SK-N-SH (cell line): ENCODE measurements at regions of chr2 and their contacts with region 1.

Region 1: DNA sequence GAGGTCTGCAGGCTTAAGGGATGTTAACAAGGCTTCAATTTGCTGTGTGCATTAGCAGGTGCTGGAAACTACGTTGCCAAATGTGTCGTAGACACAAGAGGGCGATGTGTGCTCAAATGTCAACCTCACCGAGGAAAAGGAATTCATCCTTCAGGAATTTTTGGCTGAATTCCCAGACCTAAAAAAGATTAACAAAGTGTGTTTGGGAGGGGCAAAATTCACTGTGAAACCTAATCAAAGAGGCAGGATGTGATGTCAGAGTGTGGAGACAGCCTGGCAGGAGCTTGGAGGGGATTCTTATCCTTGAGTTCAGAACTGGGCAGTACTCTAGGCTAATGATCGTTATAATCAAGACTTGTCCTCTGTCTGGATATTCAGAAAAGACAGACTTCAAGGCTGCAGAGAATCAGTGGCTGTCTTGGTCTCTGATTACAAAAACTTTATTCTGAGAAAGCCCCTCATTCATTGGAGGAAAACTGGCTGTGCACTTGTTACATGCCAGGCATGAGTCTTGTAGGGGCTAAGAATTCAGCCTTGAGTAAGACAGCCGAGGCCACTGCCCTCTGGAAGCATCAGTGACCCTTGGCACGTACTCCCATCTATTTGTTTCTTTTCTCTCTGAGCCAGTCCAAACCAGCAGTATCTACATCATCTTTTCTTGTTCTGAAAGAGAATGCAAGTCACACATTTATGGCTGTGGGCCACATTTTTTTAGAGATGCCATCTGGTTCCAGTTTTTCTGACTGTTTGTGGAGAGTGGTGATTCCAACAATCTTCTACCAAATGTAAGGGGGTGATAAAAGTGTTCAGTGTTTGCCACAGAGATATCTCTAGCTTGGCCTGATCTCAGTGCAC is 18.7 kb upstream of the SCYGR1 start:
- DNase-seq: peak; percentile 77
- H3K4me3 ChIP-seq: peak overlapping the region; percentile 13 to 28; a peak in 2 of 4 replicates
- H3K27ac ChIP-seq: peak overlapping the region; percentile 79 to 96
- H3K4me1 ChIP-seq: peaks cover 5 to 20% of the 10 kb centered on the region in 2 experiments; a peak in 2 of 4 replicates
- H3K27me3 ChIP-seq: no peaks in the 10 kb centered on the region
- CTCF ChIP-seq: peak; percentile 89
- EP300 ChIP-seq: peak; percentile 58 to 60; a peak in 3 of 4 replicates
- RAD21 ChIP-seq: peak; percentile 96

Region 2: DNA sequence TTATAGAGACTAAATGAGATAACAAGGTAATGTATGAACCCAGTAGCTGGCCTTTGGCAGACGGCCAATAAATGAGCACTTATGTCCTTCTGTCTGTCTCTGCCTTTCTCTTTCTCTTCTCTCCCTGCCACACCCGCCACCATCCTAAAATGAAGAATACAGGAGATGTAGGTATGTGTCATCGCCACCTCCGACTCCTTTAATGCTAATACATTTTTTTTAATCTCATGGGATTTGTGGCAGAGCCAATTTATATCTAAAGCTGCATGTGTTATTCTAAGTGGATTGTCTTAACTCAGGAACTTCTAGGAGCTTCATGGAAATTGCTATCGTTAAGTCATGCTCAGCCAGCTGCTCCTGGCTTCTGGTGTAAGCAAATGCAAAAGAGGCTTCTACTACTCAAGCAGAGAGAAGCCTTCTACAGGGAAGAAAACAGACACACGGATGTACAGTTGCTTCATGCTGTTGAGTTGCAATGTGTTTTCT is 29.4 kb before region 1 on chr2:
- CTCF ChIA-PET with region 1: interaction called, 12 read pairs
- POLR2A ChIA-PET with region 1: no interaction called
- DNase-seq: no peak
- H3K4me3 ChIP-seq: no peak overlapping the region
- H3K27ac ChIP-seq: no peak overlapping the region
- H3K4me1 ChIP-seq: peaks cover 4 to 25% of the 10 kb centered on the region in 2 experiments; a peak in 2 of 4 replicates
- H3K27me3 ChIP-seq: no peaks in the 10 kb centered on the region
- CTCF ChIP-seq: no peak
- EP300 ChIP-seq: no peak
- RAD21 ChIP-seq: no peak

Region 3: GRCh38 chr2:227386630-227387029 is 19.8 kb before region 1 on chr2:
- CTCF ChIA-PET with region 1: interaction called, 11 read pairs
- POLR2A ChIA-PET with region 1: no interaction called
- DNase-seq: no peak
- H3K4me3 ChIP-seq: no peak overlapping the region
- H3K27ac ChIP-seq: no peak overlapping the region
- H3K4me1 ChIP-seq: no peaks in the 10 kb centered on the region; a peak in 1 of 4 replicates
- H3K27me3 ChIP-seq: no peaks in the 10 kb centered on the region
- CTCF ChIP-seq: no peak
- EP300 ChIP-seq: no peak
- RAD21 ChIP-seq: no peak

Region 4: DNA sequence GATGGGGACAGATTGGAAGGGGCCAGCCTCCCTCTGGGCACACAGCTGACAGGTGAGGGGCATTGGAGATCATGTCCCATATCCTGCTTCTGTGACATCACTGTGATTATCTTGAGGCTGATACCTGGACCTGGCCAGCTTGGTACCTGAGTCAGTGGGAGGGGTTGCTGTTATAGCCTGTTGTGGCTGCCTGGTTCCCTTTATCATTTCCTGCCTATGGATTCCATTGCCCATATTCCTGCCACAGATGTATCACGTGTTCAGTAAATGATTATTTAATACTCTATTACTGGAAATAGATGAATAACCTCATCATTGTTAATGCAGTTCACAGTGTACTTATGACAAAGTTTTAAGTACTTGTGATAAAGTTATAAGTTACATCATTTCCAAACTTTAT is 10.8 kb before region 1 on chr2:
- CTCF ChIA-PET with region 1: interaction called, 12 read pairs
- POLR2A ChIA-PET with region 1: no interaction called
- DNase-seq: no peak
- H3K4me3 ChIP-seq: no peak overlapping the region
- H3K27ac ChIP-seq: no peak overlapping the region
- H3K4me1 ChIP-seq: no peaks in the 10 kb centered on the region
- H3K27me3 ChIP-seq: no peaks in the 10 kb centered on the region
- CTCF ChIP-seq: no peak
- EP300 ChIP-seq: no peak
- RAD21 ChIP-seq: no peak

Region 5: DNA sequence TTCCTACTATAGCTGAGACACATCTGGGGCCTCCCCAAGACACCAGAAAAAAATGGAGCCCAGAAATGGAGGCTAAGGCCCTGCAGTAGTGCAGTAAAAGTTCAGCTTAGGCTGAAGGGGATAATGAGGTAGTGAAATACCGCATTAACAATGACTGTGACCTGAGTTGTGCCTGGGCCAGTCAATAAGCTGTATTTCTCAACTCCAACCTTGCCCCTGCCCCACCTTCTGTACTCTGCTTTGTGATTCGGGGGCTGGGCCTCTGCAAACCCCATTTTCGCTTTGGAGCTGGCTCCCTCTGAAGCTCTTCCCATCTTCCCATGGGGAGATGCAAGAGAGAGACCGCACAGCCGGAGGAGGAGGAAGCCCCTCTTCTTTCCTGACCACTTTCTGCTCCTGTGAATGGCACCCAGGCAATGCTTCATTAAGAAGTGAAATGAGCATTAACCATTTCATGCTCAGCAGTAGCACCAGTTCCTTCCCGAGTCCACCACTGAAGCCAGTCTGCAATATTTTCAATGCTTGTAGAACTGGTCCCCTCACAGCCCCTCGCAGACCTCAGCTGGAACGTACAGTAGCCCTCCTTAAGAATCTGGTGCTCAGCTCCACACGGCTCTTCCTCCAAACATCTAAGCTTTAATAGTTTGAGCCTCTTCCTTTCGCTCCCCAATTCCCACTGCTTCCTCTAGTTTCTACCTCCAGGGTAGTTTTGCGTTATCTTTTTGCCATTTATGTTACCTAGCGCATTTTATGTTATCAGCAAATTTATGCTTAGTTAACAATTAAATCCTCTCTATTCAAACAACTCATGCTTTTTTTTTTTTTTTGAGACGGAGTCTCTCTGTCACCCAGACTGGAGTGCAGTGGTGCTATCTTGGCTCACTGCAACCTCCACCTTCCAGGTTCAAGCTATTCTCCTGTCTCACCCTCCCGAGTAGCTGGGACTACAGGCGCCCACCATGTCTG is 14.0 kb after region 1 on chr2:
- CTCF ChIA-PET with region 1: interaction called, 12 read pairs
- POLR2A ChIA-PET with region 1: no interaction called
- DNase-seq: no peak
- H3K4me3 ChIP-seq: no peak overlapping the region
- H3K27ac ChIP-seq: no peak overlapping the region
- H3K4me1 ChIP-seq: peaks cover 2 to 7% of the 10 kb centered on the region in 2 experiments; a peak in 2 of 4 replicates
- H3K27me3 ChIP-seq: no peaks in the 10 kb centered on the region
- CTCF ChIP-seq: no peak
- EP300 ChIP-seq: no peak
- RAD21 ChIP-seq: no peak